G401 (cell line): ENCODE measurements at regions of chr1 and their contacts with region 1.

Region 1: DNA sequence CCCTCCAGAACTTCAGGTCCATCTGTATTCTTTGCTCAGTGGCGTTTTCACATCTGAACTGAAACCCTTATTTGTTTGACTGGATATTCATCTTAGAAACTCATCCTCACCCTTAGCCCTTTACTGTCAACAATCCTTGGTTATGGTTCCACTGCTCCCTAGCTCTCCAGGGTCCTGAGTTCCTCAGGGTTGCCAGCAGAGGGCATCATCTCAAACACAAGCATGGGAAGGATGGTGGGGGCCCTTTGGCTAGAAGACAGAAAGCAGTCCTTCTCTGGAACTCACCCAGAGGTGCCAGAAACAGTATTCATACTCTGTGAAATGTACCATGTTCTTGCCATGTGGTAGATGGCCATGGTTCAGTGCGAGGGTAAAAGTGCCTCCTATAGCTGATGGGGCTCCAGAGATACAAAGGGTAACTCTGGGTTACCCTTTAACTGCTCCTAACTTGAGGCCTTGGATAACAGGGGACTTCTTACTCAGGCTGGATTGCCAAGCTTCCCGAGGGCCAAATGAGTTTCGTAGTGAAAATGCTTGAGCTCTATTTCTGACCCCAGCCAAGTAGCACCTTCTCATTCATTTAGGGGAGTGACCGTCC is 11.3 kb downstream of the NCSTN start:
- DNase-seq: peak; percentile 55

Region 2: DNA sequence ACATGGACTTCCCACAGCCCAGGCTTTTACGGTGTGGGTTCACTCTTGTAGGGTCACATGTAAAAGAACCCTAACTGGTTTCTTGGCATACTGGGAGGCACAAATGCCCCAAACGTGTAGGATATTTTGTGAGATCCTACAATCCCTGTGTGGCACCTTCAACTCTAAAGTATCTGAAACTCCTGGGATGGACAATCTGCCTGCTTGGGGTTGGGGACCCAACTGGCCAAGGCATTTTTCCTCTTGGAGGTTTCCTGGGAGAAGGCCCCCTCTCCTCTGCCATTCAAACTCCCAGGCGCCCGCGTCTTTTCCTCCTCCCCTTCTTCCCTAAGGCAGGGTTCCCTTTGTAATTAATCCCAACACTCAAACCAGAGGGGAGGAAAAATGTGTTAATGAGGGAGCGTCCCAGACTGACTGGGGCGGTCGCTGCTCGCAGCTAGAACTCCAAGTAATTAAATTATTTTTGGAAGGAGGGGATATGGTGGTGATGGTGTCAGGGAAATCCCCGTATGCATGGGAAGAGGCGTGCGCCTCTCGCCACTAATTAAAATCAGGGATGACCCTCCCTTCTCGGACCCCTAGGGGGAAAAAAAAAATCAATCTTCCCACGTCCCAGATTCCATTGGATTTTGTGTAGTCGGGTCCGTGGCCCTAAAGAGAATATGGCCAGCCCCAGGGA is 45.2 kb after region 1 on chr1:
- in situ Hi-C with region 1: loop called (anchors 5 kb)
- DNase-seq: no peak